SK-N-SH (cell line): ENCODE measurements at regions of chr11 and their contacts with region 1.

Region 1: DNA sequence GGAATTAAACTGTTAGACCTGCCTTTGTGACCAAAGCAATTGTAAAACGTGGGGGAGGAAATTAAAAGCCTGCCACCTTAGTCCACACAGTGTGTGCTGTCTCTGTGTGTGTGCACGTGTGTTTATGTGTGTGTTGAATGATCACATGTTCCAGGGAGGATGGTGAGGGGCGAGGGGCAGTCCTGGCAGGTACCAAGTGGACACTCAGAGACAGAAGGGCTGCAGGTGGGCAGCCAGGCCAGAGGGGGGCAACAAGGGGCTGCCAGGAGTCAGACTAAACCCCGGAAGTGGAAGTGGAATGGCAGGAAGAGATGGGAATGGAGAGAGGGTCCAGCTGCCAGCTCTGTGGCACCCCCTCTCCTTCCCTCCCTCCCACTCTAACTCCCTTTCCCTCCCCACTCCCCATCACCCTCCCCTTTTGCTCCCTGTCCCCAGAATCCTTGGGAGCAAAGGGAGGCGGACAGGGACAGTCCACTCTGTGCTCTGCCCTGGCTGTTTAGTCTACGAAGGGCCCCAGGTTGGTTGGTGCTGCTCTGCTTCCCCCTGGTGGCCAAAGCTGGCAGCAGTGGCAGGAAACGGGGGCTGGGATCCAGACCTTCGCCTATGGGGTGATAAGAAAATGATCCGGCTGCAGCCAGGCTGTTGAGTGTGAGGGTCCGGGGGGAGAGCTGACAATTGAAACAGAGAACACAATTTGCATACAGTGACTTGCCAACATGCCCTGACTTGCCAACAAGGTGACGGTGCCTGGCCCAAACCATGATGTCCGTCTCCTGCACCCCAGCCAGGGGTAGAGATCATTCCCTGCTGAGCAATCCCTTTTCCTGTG is 24.4 kb downstream of the P2RY2 start:
- DNase-seq: peak; percentile 88
- H3K4me3 ChIP-seq: peak overlapping the region; percentile 20 to 35; a peak in 3 of 4 replicates
- H3K27ac ChIP-seq: peak overlapping the region; percentile 8 to 64; a peak in 2 of 4 replicates
- H3K4me1 ChIP-seq: peaks cover 0 to 27% of the 10 kb centered on the region in 2 experiments; a peak in 2 of 4 replicates
- H3K27me3 ChIP-seq: no peaks in the 10 kb centered on the region
- CTCF ChIP-seq: peak; percentile 95
- EP300 ChIP-seq: no peak
- RAD21 ChIP-seq: peak; percentile 78

Region 2: DNA sequence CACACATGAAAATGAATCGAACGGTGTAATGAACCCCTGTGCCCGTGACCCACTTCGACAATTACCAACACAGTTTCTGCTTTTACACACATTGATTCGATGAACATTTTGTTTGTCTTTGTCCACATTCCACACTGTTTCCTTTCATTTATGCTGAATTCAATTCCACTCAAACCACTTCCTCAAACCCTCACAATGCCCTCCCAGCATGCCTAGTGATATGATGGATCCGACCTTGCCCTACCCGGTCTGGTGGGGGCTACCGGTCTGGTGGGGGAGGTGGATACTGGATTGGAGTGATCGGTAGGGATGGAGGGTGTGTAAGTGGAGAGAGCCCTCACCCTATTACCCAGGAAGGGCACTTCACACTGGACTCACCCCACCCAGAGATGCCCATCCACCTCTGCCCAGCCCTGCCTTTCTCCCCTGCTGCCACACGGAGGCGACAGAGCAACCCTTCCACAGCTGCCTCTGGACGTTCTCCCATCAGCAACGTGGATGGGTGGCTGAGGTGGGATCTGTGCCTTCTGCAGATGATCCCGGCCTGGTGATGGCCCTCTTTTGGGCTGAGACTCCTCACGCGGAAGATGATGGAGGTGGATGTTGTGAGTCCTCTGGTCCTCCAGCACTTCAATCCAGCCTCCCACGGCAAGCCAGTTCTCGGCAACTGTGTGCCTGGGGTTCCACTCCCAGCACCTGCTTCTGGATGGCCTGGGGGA is 57.4 kb before region 1 on chr11:
- CTCF ChIA-PET with region 1: interaction called, 53 read pairs
- POLR2A ChIA-PET with region 1: no interaction called
- DNase-seq: peak; percentile 77
- H3K4me3 ChIP-seq: no peak overlapping the region; a peak in 1 of 4 replicates
- H3K27ac ChIP-seq: no peak overlapping the region
- H3K4me1 ChIP-seq: peaks cover 0 to 12% of the 10 kb centered on the region in 2 experiments; a peak in 3 of 4 replicates
- H3K27me3 ChIP-seq: no peaks in the 10 kb centered on the region
- CTCF ChIP-seq: peak; percentile 71
- EP300 ChIP-seq: no peak
- RAD21 ChIP-seq: peak; percentile 74

Region 3: GRCh38 chr11:73218106-73218829 is 24.2 kb before region 1 on chr11 and contains the start of gene P2RY2:
- CTCF ChIA-PET with region 1: interaction called, 12 read pairs
- POLR2A ChIA-PET with region 1: no interaction called
- DNase-seq: peak; percentile 86
- H3K4me3 ChIP-seq: peak within 1 kb of the TSS; percentile 44 to 51
- H3K27ac ChIP-seq: no peak within 1 kb of the TSS
- H3K4me1 ChIP-seq: peaks cover 0 to 4% of the 10 kb centered on the region in 2 experiments; a peak in 1 of 4 replicates
- H3K27me3 ChIP-seq: peaks cover 8% of the 10 kb centered on the region
- CTCF ChIP-seq: peak; percentile 49
- EP300 ChIP-seq: no peak
- RAD21 ChIP-seq: 0 out of 2 replicates have a peak, but pooled peaks have one; percentile 6
- polyA plus RNA-seq, gene P2RY2: 0.12 and 0.13 TPM in 2 replicates

Region 4: GRCh38 chr11:73257342-73258103 is 15.1 kb after region 1 on chr11:
- CTCF ChIA-PET with region 1: interaction called, 133 read pairs
- POLR2A ChIA-PET with region 1: interaction called, 4 read pairs
- DNase-seq: no peak
- H3K4me3 ChIP-seq: no peak overlapping the region
- H3K27ac ChIP-seq: peak overlapping the region; percentile 56 to 98
- H3K4me1 ChIP-seq: peaks cover 12 to 18% of the 10 kb centered on the region in 2 experiments; a peak in 3 of 4 replicates
- H3K27me3 ChIP-seq: no peaks in the 10 kb centered on the region
- CTCF ChIP-seq: no peak
- EP300 ChIP-seq: peak in 1 of 2 experiments; percentile 53; a peak in 1 of 4 replicates
- RAD21 ChIP-seq: no peak

Region 5: DNA sequence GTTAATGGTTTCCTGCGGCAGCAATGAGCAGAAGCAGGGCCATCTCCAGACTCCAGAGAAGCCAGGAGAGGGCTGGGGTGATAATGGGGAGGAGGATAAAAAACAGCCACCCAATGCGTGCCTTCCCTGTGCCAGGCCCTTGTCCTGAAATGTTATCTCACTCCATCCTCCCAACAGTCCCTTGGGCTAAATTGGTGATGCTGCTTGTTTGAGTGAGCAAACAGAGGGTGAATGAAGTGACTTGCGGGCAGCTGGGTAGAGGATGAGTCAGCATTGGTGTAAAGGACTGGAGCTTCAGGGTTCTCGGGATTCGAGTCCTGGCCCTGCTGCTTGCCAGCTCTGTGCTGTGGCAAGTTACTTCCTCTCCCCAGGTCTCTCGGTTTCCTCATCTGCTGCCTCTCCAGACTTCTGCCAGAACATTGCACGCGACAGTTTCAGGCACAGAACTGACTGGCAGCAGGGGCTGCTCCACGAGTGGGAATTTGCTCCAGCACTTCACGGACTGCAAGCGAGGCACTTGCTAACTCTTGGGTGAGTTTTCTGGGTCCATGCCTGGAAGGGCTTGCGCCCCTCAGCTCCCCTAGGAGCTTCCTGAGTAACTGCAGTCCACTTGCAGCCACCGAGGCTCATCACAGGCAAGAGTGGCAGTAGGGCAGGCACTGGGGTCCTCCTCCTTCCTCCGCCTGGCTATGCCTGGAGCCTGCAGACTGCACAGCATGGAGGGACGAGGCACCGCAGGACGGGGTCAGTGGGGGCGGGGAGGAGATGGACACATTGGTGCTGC is 29.7 kb after region 1 on chr11 and contains the start of gene P2RY6:
- CTCF ChIA-PET with region 1: interaction called, 133 read pairs
- POLR2A ChIA-PET with region 1: interaction called, 6 read pairs
- DNase-seq: peak; percentile 87
- H3K4me3 ChIP-seq: no peak within 1 kb of the TSS
- H3K27ac ChIP-seq: peak within 1 kb of the TSS; percentile 28 to 97; a peak in 3 of 4 replicates
- H3K4me1 ChIP-seq: peaks cover 3 to 62% of the 10 kb centered on the region in 2 experiments; a peak in 2 of 4 replicates
- H3K27me3 ChIP-seq: no peaks in the 10 kb centered on the region
- CTCF ChIP-seq: no peak
- EP300 ChIP-seq: peak in 1 of 2 experiments; percentile 95; a peak in 2 of 4 replicates
- RAD21 ChIP-seq: peak; percentile 19
- polyA plus RNA-seq, gene P2RY6: 0.15 and 0.16 TPM in 2 replicates

Region 6: DNA sequence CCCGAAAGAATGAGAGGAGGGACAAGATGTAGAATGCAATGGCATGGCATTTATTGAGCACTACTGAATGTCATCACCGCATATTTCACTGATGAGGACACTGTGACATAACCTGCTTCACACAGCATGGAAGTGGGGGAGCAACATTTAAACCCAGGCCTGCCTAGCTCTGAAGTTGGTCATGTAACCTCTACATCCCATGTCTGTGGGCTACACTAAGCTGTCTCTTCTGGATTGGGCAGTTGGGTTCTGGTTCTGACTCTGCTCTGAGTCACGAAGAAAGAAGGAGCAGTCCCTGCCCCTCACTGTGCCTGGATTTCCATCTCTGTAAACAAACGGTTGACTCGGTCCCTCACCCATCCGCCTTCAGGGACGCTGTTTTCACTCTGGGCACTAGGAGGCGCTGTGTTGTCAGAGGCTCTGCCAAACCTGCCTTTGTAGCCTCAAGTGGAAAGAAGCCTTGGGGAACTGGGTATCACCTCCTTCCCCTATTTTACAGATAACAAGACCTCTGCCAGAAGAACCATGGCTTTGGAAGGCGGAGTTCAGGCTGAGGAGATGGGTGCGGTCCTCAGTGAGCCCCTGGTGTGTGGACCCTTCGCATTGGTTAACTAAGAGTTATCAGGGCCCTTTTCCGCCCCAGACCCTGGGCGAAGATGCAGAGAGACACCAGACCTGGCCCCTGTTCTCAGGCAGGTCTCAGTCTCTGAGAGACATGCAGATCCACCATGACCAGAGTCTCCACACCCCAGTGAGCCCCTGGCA is 52.9 kb after region 1 on chr11:
- CTCF ChIA-PET with region 1: interaction called, 283 read pairs
- POLR2A ChIA-PET with region 1: no interaction called
- DNase-seq: peak; percentile 77
- H3K4me3 ChIP-seq: peak overlapping the region in 1 of 2 experiments; percentile 35; a peak in 1 of 4 replicates
- H3K27ac ChIP-seq: peak overlapping the region in 1 of 2 experiments; percentile 25; a peak in 2 of 4 replicates
- H3K4me1 ChIP-seq: peaks cover 0 to 4% of the 10 kb centered on the region in 2 experiments; a peak in 1 of 4 replicates
- H3K27me3 ChIP-seq: no peaks in the 10 kb centered on the region
- CTCF ChIP-seq: peak; percentile 97
- EP300 ChIP-seq: no peak
- RAD21 ChIP-seq: peak; percentile 64